OCI-LY7 (cell line): ENCODE measurements at regions of chr22 and their contacts with region 1.

Region 1: GRCh38 chr22:33271390-33272161 is 213.4 kb upstream of the SYN3 start:
- DNase-seq: peak; percentile 99
- H3K4me3 ChIP-seq: peak overlapping the region; percentile 53
- H3K27ac ChIP-seq: peak overlapping the region; percentile 99
- H3K4me1 ChIP-seq: peaks cover 74% of the 10 kb centered on the region
- CTCF ChIP-seq: peak; percentile 45

Region 2: GRCh38 chr22:33110562-33111163 is 160.9 kb before region 1 on chr22:
- CTCF ChIA-PET with region 1: no interaction called
- POLR2A ChIA-PET with region 1: no interaction called
- intact Hi-C with region 1: loop called (anchors 5 kb)
- DNase-seq: no peak
- H3K4me3 ChIP-seq: no peak overlapping the region
- H3K27ac ChIP-seq: peak overlapping the region; percentile 92
- H3K4me1 ChIP-seq: peaks cover 58% of the 10 kb centered on the region
- CTCF ChIP-seq: no peak

Region 3: DNA sequence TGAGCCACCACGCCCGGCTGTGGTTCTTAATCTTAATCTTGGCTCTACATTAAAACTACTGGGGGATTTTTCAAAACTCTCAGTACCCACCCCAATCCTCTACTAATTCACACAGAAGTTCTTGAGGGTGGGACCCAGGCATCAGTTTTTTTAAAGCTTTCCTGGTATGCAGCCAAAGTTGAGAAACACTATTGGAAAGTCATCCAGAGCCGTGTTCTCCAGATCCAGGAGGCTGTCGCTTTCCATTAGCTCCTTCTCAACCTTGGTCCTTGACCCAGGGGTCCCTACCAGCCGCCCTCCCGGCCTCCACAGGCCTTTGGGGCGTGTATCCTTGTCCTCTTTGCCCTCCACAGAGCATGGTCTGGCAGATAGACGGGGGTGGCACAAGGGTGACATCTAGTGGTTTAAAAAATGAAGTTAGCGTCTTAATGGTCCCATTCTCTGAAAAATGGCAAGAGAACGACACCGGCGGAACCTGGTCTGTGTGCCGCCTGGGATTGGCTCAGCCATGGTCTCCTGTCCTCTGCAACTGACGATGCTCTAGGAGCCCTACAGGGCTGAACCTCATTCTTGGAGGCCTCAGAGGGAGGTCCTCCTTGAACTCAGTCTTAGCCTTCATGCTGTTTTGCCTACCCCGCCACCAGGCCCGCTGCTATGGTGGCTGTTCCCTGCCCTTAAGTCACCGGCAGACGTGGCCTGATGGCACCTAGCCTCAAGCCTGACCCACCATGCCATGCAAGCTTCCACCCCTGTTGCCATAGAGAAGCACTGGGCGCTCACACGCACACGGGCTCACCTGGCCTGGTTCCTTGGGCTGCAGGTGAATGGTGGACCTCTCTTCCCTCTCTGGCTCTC is 61.4 kb before region 1 on chr22:
- CTCF ChIA-PET with region 1: interaction called, 3 read pairs
- POLR2A ChIA-PET with region 1: interaction called, 7 read pairs
- intact Hi-C with region 1: loop called (anchors 2 kb)
- DNase-seq: peak; percentile 83
- H3K4me3 ChIP-seq: no peak overlapping the region
- H3K27ac ChIP-seq: no peak overlapping the region
- H3K4me1 ChIP-seq: peaks cover 25% of the 10 kb centered on the region
- CTCF ChIP-seq: peak; percentile 88

Region 4: GRCh38 chr22:33255791-33256190 is 15.8 kb before region 1 on chr22:
- CTCF ChIA-PET with region 1: interaction called, 5 read pairs
- POLR2A ChIA-PET with region 1: interaction called, 18 read pairs
- intact Hi-C with region 1: no loop called
- DNase-seq: peak; percentile 62
- H3K4me3 ChIP-seq: peak overlapping the region; percentile 35
- H3K27ac ChIP-seq: peak overlapping the region; percentile 55
- H3K4me1 ChIP-seq: peaks cover 55% of the 10 kb centered on the region
- CTCF ChIP-seq: no peak

Region 5: DNA sequence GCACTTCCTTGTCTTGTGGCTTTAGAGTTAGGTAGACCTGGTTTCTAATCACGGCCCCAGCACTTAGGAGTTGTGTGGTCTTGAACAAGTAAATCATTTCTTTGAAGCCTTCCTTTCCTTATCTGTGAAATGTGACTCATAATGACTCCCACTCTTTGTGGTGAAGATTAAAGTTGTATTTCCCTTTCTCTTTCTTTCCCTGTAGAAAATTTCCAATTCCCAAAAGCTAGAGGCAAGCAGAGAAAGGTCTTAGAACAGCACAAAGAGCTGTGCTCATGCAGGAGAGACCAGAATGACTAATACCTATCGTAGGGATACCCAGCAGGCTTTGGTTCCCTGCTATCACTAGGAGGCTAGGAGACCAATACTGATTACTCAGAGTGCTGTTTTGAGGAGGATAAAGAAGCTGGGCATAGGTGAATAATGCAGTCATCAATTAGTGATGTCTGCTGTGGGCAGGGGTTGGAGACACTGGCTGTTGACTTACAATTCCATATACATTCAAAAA is 57.3 kb after region 1 on chr22:
- CTCF ChIA-PET with region 1: no interaction called
- POLR2A ChIA-PET with region 1: no interaction called
- intact Hi-C with region 1: no loop called
- DNase-seq: no peak
- H3K4me3 ChIP-seq: no peak overlapping the region
- H3K27ac ChIP-seq: no peak overlapping the region
- H3K4me1 ChIP-seq: peaks cover 41% of the 10 kb centered on the region
- CTCF ChIP-seq: no peak

Region 6: DNA sequence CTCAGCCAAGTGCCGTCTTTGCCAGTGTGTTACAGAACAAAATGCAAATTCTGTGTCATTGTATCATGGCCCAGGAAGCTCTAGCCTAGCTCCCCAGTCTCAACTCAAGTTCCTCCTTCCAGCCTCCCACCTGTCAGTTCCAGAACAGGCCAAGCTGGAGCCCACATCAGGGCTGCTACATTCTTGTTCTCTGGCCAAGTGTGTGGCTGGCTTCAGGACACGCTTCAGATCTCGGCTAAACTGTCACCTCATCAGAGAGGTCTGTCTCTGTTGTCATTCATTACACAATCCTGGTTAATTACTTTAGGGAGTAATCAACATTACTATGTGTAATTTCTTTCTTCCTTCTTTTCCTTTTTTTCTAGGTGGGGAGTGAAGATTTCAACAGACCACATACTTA is 133.6 kb after region 1 on chr22:
- CTCF ChIA-PET with region 1: no interaction called
- POLR2A ChIA-PET with region 1: no interaction called
- intact Hi-C with region 1: no loop called
- DNase-seq: no peak
- H3K4me3 ChIP-seq: no peak overlapping the region
- H3K27ac ChIP-seq: no peak overlapping the region
- H3K4me1 ChIP-seq: peaks cover 7% of the 10 kb centered on the region
- CTCF ChIP-seq: no peak

Region 7: DNA sequence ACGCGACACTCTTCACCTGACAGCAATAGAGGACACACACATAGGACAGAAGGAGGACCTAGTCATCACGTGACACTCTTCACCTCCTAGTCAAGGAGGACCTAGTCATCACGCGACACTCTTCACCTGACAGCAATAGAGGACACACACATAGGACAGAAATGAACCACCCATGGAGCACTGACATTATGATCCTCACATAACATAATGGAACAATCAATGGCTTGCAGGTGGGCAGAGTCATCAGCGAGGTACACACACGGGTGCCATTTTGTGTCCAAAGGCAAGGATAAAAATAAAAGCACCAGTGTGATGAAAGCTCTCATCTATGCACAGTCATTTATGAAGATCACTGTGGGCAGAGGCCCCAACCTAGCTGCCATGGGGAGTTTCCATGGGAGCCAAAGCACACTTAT is 294.0 kb after region 1 on chr22:
- CTCF ChIA-PET with region 1: no interaction called
- POLR2A ChIA-PET with region 1: interaction called, 4 read pairs
- intact Hi-C with region 1: loop called (anchors 1 kb)
- DNase-seq: no peak
- H3K4me3 ChIP-seq: no peak overlapping the region
- H3K27ac ChIP-seq: no peak overlapping the region
- H3K4me1 ChIP-seq: peaks cover 62% of the 10 kb centered on the region
- CTCF ChIP-seq: no peak